ENCODE measurements at regions of chr12 and their contacts with region 1.

Region 1: GRCh38 chr12:8549381-8549780 is 8.7 kb upstream of the CLEC4E start:
- DNase-seq: no peak
- ATAC-seq: no peak
- H3K4me3 ChIP-seq: no peak overlapping the region
- H3K4me3 Mint-ChIP-seq: no peak overlapping the region
- H3K27ac ChIP-seq: no peak overlapping the region
- H3K27ac Mint-ChIP-seq: no peak overlapping the region
- H3K4me1 ChIP-seq: no peaks in the 10 kb centered on the region
- H3K4me1 Mint-ChIP-seq: peaks cover 3% of the 10 kb centered on the region
- H3K27me3 ChIP-seq: no peaks in the 10 kb centered on the region
- H3K27me3 Mint-ChIP-seq: peaks cover 9% of the 10 kb centered on the region
- CTCF ChIP-seq: no peak

Region 2: GRCh38 chr12:8609061-8609570 is 59.7 kb after region 1 on chr12:
- CTCF ChIA-PET with region 1: interaction called, 9 read pairs
- POLR2A ChIA-PET with region 1: interaction called, 4 read pairs
- intact Hi-C with region 1: loop called in 1 of 2 experiments (anchors 5 kb)
- DNase-seq: peak in 3 of 14 experiments; percentile 18 to 44 (median 37)
- ATAC-seq: peak; percentile 32
- H3K4me3 ChIP-seq: no peak overlapping the region
- H3K4me3 Mint-ChIP-seq: peak overlapping the region; percentile 58
- H3K27ac ChIP-seq: no peak overlapping the region
- H3K27ac Mint-ChIP-seq: no peak overlapping the region
- H3K4me1 ChIP-seq: peaks cover 5% of the 10 kb centered on the region
- H3K4me1 Mint-ChIP-seq: peaks cover 12% of the 10 kb centered on the region
- H3K27me3 ChIP-seq: no peaks in the 10 kb centered on the region
- H3K27me3 Mint-ChIP-seq: peaks cover 7% of the 10 kb centered on the region
- CTCF ChIP-seq: peak; percentile 62